CD4-positive, alpha-beta T cell (primary cell): ENCODE measurements at regions of chr7 and their contacts with region 1.

Region 1: GRCh38 chr7:7182156-7183060 is at the start of gene C1GALT1:
- DNase-seq: peak; percentile 97 to 100 (median 98)
- ATAC-seq: peak; percentile 84
- H3K4me3 ChIP-seq: peak within 1 kb of the TSS; percentile 95
- H3K4me3 Mint-ChIP-seq: peak within 1 kb of the TSS; percentile 94
- H3K27ac ChIP-seq: peak within 1 kb of the TSS; percentile 89 to 91
- H3K27ac Mint-ChIP-seq: no peak within 1 kb of the TSS
- H3K4me1 ChIP-seq: peaks cover 28% of the 10 kb centered on the region
- H3K4me1 Mint-ChIP-seq: peaks cover 8% of the 10 kb centered on the region
- H3K27me3 ChIP-seq: no peaks in the 10 kb centered on the region
- H3K27me3 Mint-ChIP-seq: no peaks in the 10 kb centered on the region
- CTCF ChIP-seq: peak; percentile 48
- total RNA-seq, gene C1GALT1: 49.4 to 51.9 TPM

Region 2: DNA sequence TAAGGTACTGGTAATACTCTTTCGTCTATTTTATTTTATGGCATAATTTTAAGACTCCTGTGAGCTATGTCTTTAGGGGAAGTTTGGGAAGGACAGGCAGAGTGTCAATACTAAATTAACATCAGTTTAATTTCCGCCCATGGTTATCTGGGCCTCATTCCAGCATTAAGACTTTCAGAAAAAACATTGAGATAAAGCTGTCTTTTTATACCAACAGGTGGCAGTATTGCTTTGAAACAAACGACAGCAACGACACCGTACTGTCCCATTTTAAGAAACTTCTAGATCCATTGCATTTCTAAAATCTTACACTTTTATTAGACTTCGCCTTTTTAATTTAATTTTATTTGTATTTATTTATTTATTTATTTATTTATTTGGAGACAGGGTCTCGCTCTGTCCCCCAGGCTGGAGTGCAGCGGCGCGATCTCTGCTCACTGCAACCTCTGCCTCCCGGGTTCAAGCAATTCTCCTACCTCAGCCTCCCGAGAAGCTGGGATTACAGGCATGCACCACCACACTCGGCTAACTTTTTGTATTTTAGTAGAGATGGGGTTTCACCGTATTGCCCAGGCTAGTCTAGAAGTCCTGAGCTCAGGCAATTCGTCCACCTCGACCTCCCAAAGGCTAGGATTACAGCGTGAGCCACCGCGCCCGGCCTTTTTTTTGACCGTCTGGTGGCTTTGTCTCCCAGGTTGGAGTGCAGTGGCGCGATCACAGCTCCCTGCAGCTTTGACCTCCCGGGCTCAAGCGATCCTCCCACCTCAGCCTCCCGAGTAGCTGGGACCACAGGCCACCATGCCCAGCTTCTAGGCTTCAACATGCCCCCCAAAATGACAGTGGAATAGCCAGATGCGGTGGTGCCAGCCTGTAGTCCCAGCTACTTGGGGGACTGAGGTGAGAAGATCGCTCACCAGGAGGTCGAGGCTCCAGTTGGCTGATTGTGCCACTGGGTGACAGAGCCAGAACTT is 78.8 kb before region 1 on chr7:
- CTCF ChIA-PET with region 1: interaction called, 10 read pairs
- POLR2A ChIA-PET with region 1: interaction called, 103 read pairs
- intact Hi-C with region 1: loop called (anchors 1 to 5 kb)
- DNase-seq: peak in 4 of 14 experiments; percentile 19 to 82 (median 81)
- ATAC-seq: peak; percentile 75
- H3K4me3 ChIP-seq: no peak overlapping the region
- H3K4me3 Mint-ChIP-seq: no peak overlapping the region
- H3K27ac ChIP-seq: no peak overlapping the region
- H3K27ac Mint-ChIP-seq: no peak overlapping the region
- H3K4me1 ChIP-seq: peaks cover 15% of the 10 kb centered on the region
- H3K4me1 Mint-ChIP-seq: peaks cover 29% of the 10 kb centered on the region
- H3K27me3 ChIP-seq: no peaks in the 10 kb centered on the region
- H3K27me3 Mint-ChIP-seq: no peaks in the 10 kb centered on the region
- CTCF ChIP-seq: peak; percentile 74

Region 3: GRCh38 chr7:7164591-7164990 is 17.8 kb before region 1 on chr7:
- CTCF ChIA-PET with region 1: interaction called, 15 read pairs
- POLR2A ChIA-PET with region 1: interaction called, 119 read pairs
- intact Hi-C with region 1: no loop called
- DNase-seq: no peak
- ATAC-seq: no peak
- H3K4me3 ChIP-seq: no peak overlapping the region
- H3K4me3 Mint-ChIP-seq: no peak overlapping the region
- H3K27ac ChIP-seq: no peak overlapping the region
- H3K27ac Mint-ChIP-seq: peak overlapping the region; percentile 57
- H3K4me1 ChIP-seq: peaks cover 12% of the 10 kb centered on the region
- H3K4me1 Mint-ChIP-seq: peaks cover 60% of the 10 kb centered on the region
- H3K27me3 ChIP-seq: no peaks in the 10 kb centered on the region
- H3K27me3 Mint-ChIP-seq: no peaks in the 10 kb centered on the region
- CTCF ChIP-seq: no peak

Region 4: DNA sequence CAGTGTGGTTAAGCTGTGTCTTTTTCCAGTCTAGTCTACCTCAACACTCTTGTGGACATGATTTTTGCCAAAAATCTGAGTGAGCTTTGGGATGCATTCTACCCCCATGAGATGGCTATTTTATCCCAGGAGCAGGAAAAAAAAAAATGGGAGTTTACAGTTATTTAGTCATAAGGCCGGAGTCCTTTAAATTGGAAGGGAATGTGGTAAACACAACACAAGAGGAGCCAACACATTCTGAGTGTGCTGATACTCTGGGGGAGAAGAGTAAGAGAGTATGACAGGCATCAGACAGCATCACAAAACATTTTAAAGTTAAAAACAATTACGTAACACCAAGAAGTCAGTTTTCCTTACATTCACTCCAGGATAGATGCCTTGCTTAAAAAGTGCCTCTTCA is 46.1 kb after region 1 on chr7:
- CTCF ChIA-PET with region 1: interaction called, 3 read pairs
- POLR2A ChIA-PET with region 1: interaction called, 4 read pairs
- intact Hi-C with region 1: loop called in 1 of 2 experiments (anchors 5 kb)
- DNase-seq: no peak
- ATAC-seq: no peak
- H3K4me3 ChIP-seq: no peak overlapping the region
- H3K4me3 Mint-ChIP-seq: no peak overlapping the region
- H3K27ac ChIP-seq: no peak overlapping the region
- H3K27ac Mint-ChIP-seq: no peak overlapping the region
- H3K4me1 ChIP-seq: no peaks in the 10 kb centered on the region
- H3K4me1 Mint-ChIP-seq: peaks cover 35% of the 10 kb centered on the region
- H3K27me3 ChIP-seq: no peaks in the 10 kb centered on the region
- H3K27me3 Mint-ChIP-seq: no peaks in the 10 kb centered on the region
- CTCF ChIP-seq: no peak

Region 5: DNA sequence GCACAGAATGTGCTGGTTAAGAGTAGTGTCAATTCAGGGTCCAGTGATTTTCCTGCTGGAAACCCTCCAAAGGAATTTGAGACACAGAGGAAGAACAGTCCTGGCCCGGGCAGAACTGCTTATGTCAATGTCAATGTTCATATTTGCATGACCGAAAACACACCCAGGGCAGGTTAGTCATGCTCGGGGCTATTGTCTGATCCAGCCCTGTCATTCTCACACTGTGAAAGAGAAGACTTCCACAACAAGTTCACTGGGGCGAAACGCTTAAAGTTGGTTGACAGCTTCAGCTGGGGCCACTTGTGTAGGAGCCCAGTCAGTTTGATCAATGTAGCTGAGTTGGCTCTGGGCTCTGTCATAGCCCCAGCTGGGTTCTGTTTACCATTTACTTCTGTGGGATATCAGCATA is 139.3 kb after region 1 on chr7:
- CTCF ChIA-PET with region 1: no interaction called
- POLR2A ChIA-PET with region 1: no interaction called
- intact Hi-C with region 1: no loop called
- DNase-seq: no peak
- ATAC-seq: no peak
- H3K4me3 ChIP-seq: no peak overlapping the region
- H3K4me3 Mint-ChIP-seq: no peak overlapping the region
- H3K27ac ChIP-seq: no peak overlapping the region
- H3K27ac Mint-ChIP-seq: no peak overlapping the region
- H3K4me1 ChIP-seq: no peaks in the 10 kb centered on the region
- H3K4me1 Mint-ChIP-seq: no peaks in the 10 kb centered on the region
- H3K27me3 ChIP-seq: no peaks in the 10 kb centered on the region
- H3K27me3 Mint-ChIP-seq: no peaks in the 10 kb centered on the region
- CTCF ChIP-seq: no peak

Region 6: GRCh38 chr7:7424151-7424873 is 241.9 kb after region 1 on chr7:
- CTCF ChIA-PET with region 1: no interaction called
- POLR2A ChIA-PET with region 1: interaction called, 3 read pairs
- intact Hi-C with region 1: loop called in 1 of 2 experiments (anchors 5 kb)
- DNase-seq: peak in 13 of 14 experiments; percentile 5 to 65 (median 19)
- ATAC-seq: peak; percentile 67
- H3K4me3 ChIP-seq: peak overlapping the region; percentile 55
- H3K4me3 Mint-ChIP-seq: peak overlapping the region; percentile 90
- H3K27ac ChIP-seq: no peak overlapping the region
- H3K27ac Mint-ChIP-seq: peak overlapping the region; percentile 19
- H3K4me1 ChIP-seq: no peaks in the 10 kb centered on the region
- H3K4me1 Mint-ChIP-seq: no peaks in the 10 kb centered on the region
- H3K27me3 ChIP-seq: no peaks in the 10 kb centered on the region
- H3K27me3 Mint-ChIP-seq: no peaks in the 10 kb centered on the region
- CTCF ChIP-seq: peak; percentile 56

Region 7: GRCh38 chr7:7640221-7641128 is 458.1 kb after region 1 on chr7 and contains the start of gene UMAD1:
- CTCF ChIA-PET with region 1: no interaction called
- POLR2A ChIA-PET with region 1: interaction called, 31 read pairs
- intact Hi-C with region 1: loop called (anchors 5 to 10 kb)
- DNase-seq: peak; percentile 94 to 100 (median 98)
- ATAC-seq: peak; percentile 83
- H3K4me3 ChIP-seq: peak within 1 kb of the TSS; percentile 88
- H3K4me3 Mint-ChIP-seq: peak within 1 kb of the TSS; percentile 90
- H3K27ac ChIP-seq: peak within 1 kb of the TSS; percentile 98 to 99
- H3K27ac Mint-ChIP-seq: peak within 1 kb of the TSS; percentile 98
- H3K4me1 ChIP-seq: peaks cover 17% of the 10 kb centered on the region
- H3K4me1 Mint-ChIP-seq: peaks cover 59% of the 10 kb centered on the region
- H3K27me3 ChIP-seq: no peaks in the 10 kb centered on the region
- H3K27me3 Mint-ChIP-seq: no peaks in the 10 kb centered on the region
- CTCF ChIP-seq: no peak
- total RNA-seq, gene UMAD1: 11.0 to 15.3 TPM